Activated CD8-positive, alpha-beta T cell treated with anti-CD3 and anti-CD28 coated beads for 36 hours (primary cell): ENCODE measurements at regions of chr9 and their contacts with region 1.

Region 1: GRCh38 chr9:133726401-133727276 is 11.5 kb downstream of the SARDH start:
- DNase-seq: peak; percentile 80
- ATAC-seq: peak; percentile 75
- H3K4me3 Mint-ChIP-seq: no peak overlapping the region
- H3K27ac Mint-ChIP-seq: no peak overlapping the region
- H3K4me1 Mint-ChIP-seq: peaks cover 8% of the 10 kb centered on the region
- H3K27me3 Mint-ChIP-seq: no peaks in the 10 kb centered on the region
- CTCF ChIP-seq: peak; percentile 68

Region 2: GRCh38 chr9:133532937-133533668 is 193.5 kb before region 1 on chr9:
- CTCF ChIA-PET with region 1: interaction called, 15 read pairs
- POLR2A ChIA-PET with region 1: no interaction called
- intact Hi-C with region 1: loop called (anchors 10 kb)
- DNase-seq: peak; percentile 87
- ATAC-seq: peak; percentile 85
- H3K4me3 Mint-ChIP-seq: no peak overlapping the region
- H3K27ac Mint-ChIP-seq: no peak overlapping the region
- H3K4me1 Mint-ChIP-seq: peaks cover 12% of the 10 kb centered on the region
- H3K27me3 Mint-ChIP-seq: peaks cover 5% of the 10 kb centered on the region
- CTCF ChIP-seq: peak; percentile 55

Region 3: GRCh38 chr9:133589454-133590227 is 137.0 kb before region 1 on chr9:
- CTCF ChIA-PET with region 1: interaction called, 12 read pairs
- POLR2A ChIA-PET with region 1: no interaction called
- intact Hi-C with region 1: no loop called
- DNase-seq: peak; percentile 69
- ATAC-seq: peak; percentile 60
- H3K4me3 Mint-ChIP-seq: no peak overlapping the region
- H3K27ac Mint-ChIP-seq: no peak overlapping the region
- H3K4me1 Mint-ChIP-seq: no peaks in the 10 kb centered on the region
- H3K27me3 Mint-ChIP-seq: peaks cover 12% of the 10 kb centered on the region
- CTCF ChIP-seq: peak; percentile 86

Region 4: DNA sequence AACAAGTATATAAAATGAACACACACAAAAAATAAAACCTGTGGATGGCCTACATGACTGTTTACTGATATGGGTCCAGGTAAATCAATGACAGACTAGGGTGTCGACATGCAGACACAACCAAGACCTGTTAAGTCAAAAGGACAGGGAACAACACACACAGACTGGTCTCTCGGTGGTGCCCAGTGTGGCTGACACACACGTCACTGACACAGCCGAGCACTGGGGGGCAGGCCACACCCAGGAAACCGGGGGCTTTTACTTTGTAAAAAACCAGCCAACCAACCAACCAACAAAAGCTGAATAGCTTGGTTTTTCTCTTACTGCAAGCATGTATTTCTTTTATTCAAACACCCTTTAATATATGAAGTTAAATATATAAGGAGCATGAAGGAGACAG is 122.4 kb before region 1 on chr9:
- CTCF ChIA-PET with region 1: interaction called, 15 read pairs
- POLR2A ChIA-PET with region 1: no interaction called
- intact Hi-C with region 1: loop called (anchors 10 kb)
- DNase-seq: peak; percentile 75
- ATAC-seq: peak; percentile 88
- H3K4me3 Mint-ChIP-seq: no peak overlapping the region
- H3K27ac Mint-ChIP-seq: no peak overlapping the region
- H3K4me1 Mint-ChIP-seq: peaks cover 8% of the 10 kb centered on the region
- H3K27me3 Mint-ChIP-seq: peaks cover 12% of the 10 kb centered on the region
- CTCF ChIP-seq: peak; percentile 56

Region 5: DNA sequence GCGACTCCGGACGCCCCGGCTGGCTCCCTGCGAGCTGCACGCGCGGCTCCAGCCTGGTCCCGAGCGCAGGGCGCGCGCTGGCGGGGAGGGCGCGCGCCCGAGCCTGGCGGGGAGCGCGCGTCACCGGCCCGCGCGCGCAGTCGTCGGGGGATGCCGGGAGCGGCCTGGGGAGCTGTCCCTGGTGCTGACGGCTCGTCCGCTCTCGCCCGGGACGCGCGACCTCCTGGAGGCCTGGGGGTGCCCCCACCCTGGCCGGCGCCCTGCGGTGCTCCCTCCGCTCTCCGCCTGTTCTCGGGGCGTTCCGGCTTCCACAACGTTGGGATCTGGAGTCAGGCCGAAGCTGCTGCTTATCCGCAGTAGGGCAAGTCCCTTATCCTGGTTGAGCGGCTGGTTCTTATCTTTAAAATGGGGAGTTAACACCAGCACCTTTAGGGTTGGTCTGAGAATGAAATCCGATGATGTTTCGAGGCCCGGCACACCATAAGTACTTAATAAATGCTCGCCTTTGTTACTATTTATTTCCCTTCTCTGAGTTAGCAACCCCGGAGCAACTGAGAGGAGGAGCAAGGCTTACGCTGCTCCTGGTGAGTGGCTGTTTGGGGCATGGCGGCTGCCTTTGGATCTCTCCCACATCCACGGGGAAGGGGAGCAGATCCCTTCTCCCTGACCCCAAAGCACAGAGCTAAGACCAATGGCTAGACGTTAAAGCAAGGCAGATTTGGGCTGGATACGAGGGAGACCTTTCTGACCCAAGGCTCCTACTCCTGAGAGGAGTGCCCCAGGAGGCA is 117.1 kb before region 1 on chr9 and contains the start of gene FAM163B:
- CTCF ChIA-PET with region 1: interaction called, 15 read pairs
- POLR2A ChIA-PET with region 1: no interaction called
- intact Hi-C with region 1: loop called (anchors 10 kb)
- DNase-seq: peak; percentile 44
- ATAC-seq: peak; percentile 78
- H3K4me3 Mint-ChIP-seq: no peak within 1 kb of the TSS
- H3K27ac Mint-ChIP-seq: no peak within 1 kb of the TSS
- H3K4me1 Mint-ChIP-seq: peaks cover 4% of the 10 kb centered on the region
- H3K27me3 Mint-ChIP-seq: peaks cover 32% of the 10 kb centered on the region
- CTCF ChIP-seq: no peak
- total RNA-seq, gene FAM163B: not detected

Region 6: GRCh38 chr9:133658442-133659431 is 67.9 kb before region 1 on chr9:
- CTCF ChIA-PET with region 1: interaction called, 8 read pairs
- POLR2A ChIA-PET with region 1: no interaction called
- intact Hi-C with region 1: loop called (anchors 10 kb)
- DNase-seq: peak; percentile 29
- ATAC-seq: no peak
- H3K4me3 Mint-ChIP-seq: no peak overlapping the region
- H3K27ac Mint-ChIP-seq: no peak overlapping the region
- H3K4me1 Mint-ChIP-seq: peaks cover 25% of the 10 kb centered on the region
- H3K27me3 Mint-ChIP-seq: peaks cover 41% of the 10 kb centered on the region
- CTCF ChIP-seq: no peak

Region 7: DNA sequence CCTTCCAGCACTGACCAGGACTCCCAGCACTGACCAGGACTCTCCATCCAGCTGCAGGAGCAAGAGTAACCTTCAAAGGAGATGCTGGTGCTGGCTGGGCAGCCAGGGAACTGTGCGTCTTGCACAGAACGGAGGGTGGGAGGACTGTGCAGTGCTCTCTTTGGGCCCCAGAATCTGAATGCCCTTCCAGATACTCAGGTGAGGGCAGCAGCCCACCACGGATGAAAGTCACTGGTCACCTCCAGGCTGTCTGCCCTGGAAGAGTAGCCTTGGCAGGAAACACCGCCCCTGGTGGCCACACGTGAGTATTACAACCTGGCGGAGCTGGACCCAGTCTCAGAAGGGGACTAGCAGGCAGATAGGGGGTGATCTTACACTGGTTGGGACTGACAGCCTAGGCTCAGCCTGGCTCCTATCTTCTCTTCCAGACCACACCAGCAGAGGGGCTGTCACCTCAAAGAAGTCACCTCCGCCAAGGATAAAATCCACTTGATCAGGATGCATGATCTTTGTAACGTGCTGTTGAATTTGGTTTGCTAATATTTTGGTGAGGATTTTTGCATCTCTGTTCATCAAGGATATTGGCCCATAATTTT is 16.3 kb after region 1 on chr9:
- CTCF ChIA-PET with region 1: interaction called, 18 read pairs
- POLR2A ChIA-PET with region 1: no interaction called
- intact Hi-C with region 1: no loop called
- DNase-seq: peak; percentile 82
- ATAC-seq: peak; percentile 75
- H3K4me3 Mint-ChIP-seq: no peak overlapping the region
- H3K27ac Mint-ChIP-seq: no peak overlapping the region
- H3K4me1 Mint-ChIP-seq: peaks cover 9% of the 10 kb centered on the region
- H3K27me3 Mint-ChIP-seq: no peaks in the 10 kb centered on the region
- CTCF ChIP-seq: peak; percentile 99